Heart right ventricle (tissue), 16 donors: ENCODE measurements at regions of chr1 and their contacts with region 1.

Region 1: DNA sequence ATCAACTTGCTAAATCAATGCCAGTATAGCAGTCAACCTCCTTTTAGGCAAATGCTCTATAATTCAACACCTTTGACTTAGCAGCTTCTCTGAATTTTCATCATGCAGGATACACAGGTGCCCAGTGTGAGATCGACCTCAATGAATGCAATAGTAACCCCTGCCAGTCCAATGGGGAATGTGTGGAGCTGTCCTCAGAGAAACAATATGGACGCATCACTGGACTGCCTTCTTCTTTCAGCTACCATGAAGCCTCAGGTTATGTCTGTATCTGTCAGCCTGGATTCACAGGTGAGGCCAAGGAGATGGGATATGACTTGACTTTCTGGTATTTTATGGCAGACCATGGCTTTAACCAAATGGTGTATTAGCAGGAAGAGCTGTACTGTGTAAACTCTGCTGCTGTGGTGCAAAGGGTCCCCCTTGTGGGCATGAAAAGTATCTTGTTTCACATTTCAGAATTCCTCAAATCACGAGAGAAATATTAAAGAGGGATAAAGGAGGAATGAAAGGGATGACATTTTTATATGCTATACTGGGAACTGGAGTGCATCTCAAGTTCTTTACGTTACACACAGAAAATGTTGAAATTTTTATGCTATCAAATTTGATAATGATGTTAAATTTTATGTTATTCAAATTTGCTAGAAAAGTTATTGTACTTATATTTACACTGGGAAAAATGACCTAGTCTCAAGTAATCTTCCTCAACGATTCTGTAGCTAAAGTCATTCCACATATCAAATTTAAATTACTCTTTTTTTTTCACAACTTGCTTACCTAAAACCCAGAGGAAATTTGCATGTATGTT is 88.9 kb downstream of the CRB1 start:
- DNase-seq: peak in 1 of 2 donors; percentile 11
- ATAC-seq: peak in 6 of 8 donors; percentile 34 to 72 (median 52)
- H3K4me3 ChIP-seq: no peak overlapping the region
- H3K27ac ChIP-seq: no peak overlapping the region
- H3K4me1 ChIP-seq: no peaks in the 10 kb centered on the region
- H3K27me3 ChIP-seq: no peaks in the 10 kb centered on the region
- CTCF ChIP-seq: peak; percentile 40 to 74 (median 67)

Region 2: DNA sequence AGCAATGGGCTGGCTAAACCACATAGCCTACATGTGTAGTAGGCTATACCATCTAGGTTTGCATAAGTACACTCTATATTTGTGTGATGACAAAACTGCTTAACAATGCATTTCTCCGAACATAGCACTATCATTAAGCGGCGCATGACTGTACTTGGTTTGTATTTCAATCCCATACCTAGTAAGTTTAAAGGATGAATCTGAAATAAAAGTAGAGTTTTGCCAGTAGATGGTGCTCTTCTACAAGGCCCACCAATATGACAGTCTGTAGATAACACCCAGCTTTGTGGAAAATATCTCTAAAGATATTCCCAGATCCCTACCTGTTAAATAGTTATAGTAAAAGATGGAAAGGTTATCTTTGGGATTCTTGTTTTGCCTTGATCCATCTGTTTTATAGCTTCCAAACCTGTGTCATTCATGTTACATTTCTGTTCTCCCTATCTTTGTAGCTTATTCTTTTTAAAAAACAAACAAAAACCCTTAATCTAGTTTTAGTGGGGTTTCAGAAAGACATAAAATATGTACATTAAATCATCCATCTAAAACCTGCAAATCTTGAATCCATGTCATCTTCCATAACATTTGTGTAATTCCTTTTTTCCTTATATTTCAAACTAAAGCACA is 176.6 kb before region 1 on chr1:
- intact Hi-C with region 1: loop called in 8 of 10 experiments (anchors 2 to 10 kb)
- DNase-seq: no peak
- ATAC-seq: peak in 4 of 8 donors; percentile 35 to 55 (median 48)
- H3K4me3 ChIP-seq: no peak overlapping the region
- H3K27ac ChIP-seq: no peak overlapping the region
- H3K4me1 ChIP-seq: peaks cover 0 to 6% (median 0%) of the 10 kb centered on the region in 9 donors
- H3K27me3 ChIP-seq: no peaks in the 10 kb centered on the region
- CTCF ChIP-seq: peak; percentile 39 to 81 (median 67)

Region 3: DNA sequence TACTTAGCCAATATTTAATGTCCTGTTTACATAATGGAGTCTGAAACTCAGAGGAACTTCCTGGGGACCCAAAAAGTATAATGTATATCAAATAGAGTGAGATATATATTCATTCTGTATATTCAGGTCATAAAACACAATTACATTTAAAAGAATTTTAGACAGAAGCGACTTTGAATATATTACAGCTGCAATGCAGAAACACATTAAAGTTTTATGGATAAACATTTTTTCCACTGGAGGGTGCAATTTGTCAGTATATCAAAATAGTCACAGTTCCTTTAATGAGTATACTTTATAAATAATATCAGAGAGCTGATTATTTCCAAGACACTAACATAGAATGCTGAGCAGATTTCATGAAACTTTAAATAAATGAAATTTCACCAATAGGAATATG is 132.8 kb before region 1 on chr1:
- intact Hi-C with region 1: loop called in 3 of 10 experiments (anchors 10 kb)
- DNase-seq: no peak
- ATAC-seq: no peak
- H3K4me3 ChIP-seq: no peak overlapping the region
- H3K27ac ChIP-seq: no peak overlapping the region
- H3K4me1 ChIP-seq: no peaks in the 10 kb centered on the region
- H3K27me3 ChIP-seq: no peaks in the 10 kb centered on the region
- CTCF ChIP-seq: peak in 6 of 9 donors; percentile 27 to 48 (median 36)

Region 4: GRCh38 chr1:197327776-197328364 is 29.1 kb before region 1 on chr1:
- intact Hi-C with region 1: loop called in 1 of 10 experiments (anchors 2 kb)
- DNase-seq: no peak
- ATAC-seq: no peak
- H3K4me3 ChIP-seq: no peak overlapping the region
- H3K27ac ChIP-seq: no peak overlapping the region
- H3K4me1 ChIP-seq: peaks cover 0 to 4% (median 0%) of the 10 kb centered on the region in 9 donors
- H3K27me3 ChIP-seq: no peaks in the 10 kb centered on the region
- CTCF ChIP-seq: peak; percentile 20 to 68 (median 49)